T-cell (primary cell): ENCODE measurements at regions of chr1 and their contacts with region 1.

Region 1: GRCh38 chr1:154335025-154335714 is 9.8 kb downstream of the ATP8B2 start:
- DNase-seq: peak; percentile 80 to 97 (median 89)
- ATAC-seq: peak; percentile 89 to 95 (median 93)
- H3K4me3 ChIP-seq: no peak overlapping the region
- H3K4me3 Mint-ChIP-seq: peak overlapping the region in 2 of 3 donors; percentile 35 to 54
- H3K27ac ChIP-seq: peak overlapping the region; percentile 75
- H3K27ac Mint-ChIP-seq: peak overlapping the region; percentile 92 to 95
- H3K4me1 ChIP-seq: peaks cover 43 to 85% of the 10 kb centered on the region in 2 experiments
- H3K4me1 Mint-ChIP-seq: peaks cover 80 to 88% (median 83%) of the 10 kb centered on the region in 3 donors
- H3K27me3 ChIP-seq: no peaks in the 10 kb centered on the region
- H3K27me3 Mint-ChIP-seq: no peaks in the 10 kb centered on the region

Region 2: DNA sequence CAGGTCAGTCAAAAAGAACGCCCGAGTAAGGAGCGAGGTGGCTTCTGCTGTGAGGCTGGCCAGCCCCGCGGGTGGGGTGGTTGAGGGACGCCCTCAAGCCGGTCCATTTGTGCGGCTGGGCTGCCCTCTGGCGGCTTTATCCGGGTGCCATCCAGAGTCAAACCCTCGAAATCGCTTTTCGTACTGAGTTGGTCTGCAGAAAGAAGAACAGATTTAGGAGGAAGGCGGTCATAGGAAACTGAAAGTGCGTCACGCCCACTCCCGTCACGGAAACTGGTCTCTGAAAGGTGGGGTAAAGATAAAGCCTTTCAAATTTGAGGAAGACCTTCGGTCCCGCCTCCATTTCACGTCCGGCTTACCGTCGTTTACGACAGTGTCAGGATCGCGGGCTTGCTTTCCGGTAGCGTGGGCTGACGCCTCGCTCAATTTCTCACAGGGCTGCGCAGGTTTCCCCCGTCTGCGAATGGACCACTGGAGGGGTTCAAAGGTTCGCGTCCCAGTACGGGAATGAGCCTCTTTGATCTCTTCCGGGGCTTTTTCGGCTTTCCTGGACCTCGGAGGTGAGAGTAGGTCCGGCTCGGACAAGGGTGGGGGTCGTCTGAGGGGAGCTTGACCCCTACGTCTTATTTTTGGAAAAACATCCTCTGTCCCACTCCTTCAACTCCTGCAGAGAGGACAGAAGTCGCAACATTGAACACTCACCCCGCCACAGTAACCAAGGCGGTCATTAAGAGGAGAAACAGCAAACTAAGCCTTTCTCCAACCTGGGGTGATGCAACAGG is 62.8 kb before region 1 on chr1 and contains the start of gene HAX1:
- CTCF ChIA-PET with region 1: interaction called, 5 to 19 read pairs
- POLR2A ChIA-PET with region 1: interaction called in 1 of 2 experiments, 14 read pairs
- DNase-seq: peak; percentile 86 to 99 (median 96)
- ATAC-seq: peak; percentile 92 to 93 (median 92)
- H3K4me3 ChIP-seq: peak within 1 kb of the TSS; percentile 98 to 99
- H3K4me3 Mint-ChIP-seq: peak within 1 kb of the TSS; percentile 97 to 100 (median 97)
- H3K27ac ChIP-seq: peak within 1 kb of the TSS; percentile 96
- H3K27ac Mint-ChIP-seq: peak within 1 kb of the TSS; percentile 98
- H3K4me1 ChIP-seq: peaks cover 17 to 28% of the 10 kb centered on the region in 2 experiments
- H3K4me1 Mint-ChIP-seq: peaks cover 34 to 41% (median 39%) of the 10 kb centered on the region in 3 donors
- H3K27me3 ChIP-seq: no peaks in the 10 kb centered on the region
- H3K27me3 Mint-ChIP-seq: no peaks in the 10 kb centered on the region
- total RNA-seq, gene HAX1: 69.4 to 97.7 (median 92.5) TPM

Region 3: GRCh38 chr1:154324669-154325582 is 10.2 kb before region 1 on chr1 and contains the start of gene ATP8B2:
- CTCF ChIA-PET with region 1: interaction called, 12 to 87 read pairs
- POLR2A ChIA-PET with region 1: interaction called, 6 to 10 read pairs
- DNase-seq: peak; percentile 42 to 88 (median 70)
- ATAC-seq: peak; percentile 54 to 58 (median 55)
- H3K4me3 ChIP-seq: peak within 1 kb of the TSS; percentile 79 to 92
- H3K4me3 Mint-ChIP-seq: peak within 1 kb of the TSS; percentile 91 to 94 (median 94)
- H3K27ac ChIP-seq: peak within 1 kb of the TSS; percentile 82
- H3K27ac Mint-ChIP-seq: peak within 1 kb of the TSS; percentile 89 to 95
- H3K4me1 ChIP-seq: peaks cover 20 to 49% of the 10 kb centered on the region in 2 experiments
- H3K4me1 Mint-ChIP-seq: peaks cover 40 to 44% (median 43%) of the 10 kb centered on the region in 3 donors
- H3K27me3 ChIP-seq: peaks cover 0 to 14% of the 10 kb centered on the region in 2 experiments
- H3K27me3 Mint-ChIP-seq: peaks cover 0 to 2% of the 10 kb centered on the region in 2 donors
- total RNA-seq, gene ATP8B2: 142 to 172 (median 149) TPM

Region 4: DNA sequence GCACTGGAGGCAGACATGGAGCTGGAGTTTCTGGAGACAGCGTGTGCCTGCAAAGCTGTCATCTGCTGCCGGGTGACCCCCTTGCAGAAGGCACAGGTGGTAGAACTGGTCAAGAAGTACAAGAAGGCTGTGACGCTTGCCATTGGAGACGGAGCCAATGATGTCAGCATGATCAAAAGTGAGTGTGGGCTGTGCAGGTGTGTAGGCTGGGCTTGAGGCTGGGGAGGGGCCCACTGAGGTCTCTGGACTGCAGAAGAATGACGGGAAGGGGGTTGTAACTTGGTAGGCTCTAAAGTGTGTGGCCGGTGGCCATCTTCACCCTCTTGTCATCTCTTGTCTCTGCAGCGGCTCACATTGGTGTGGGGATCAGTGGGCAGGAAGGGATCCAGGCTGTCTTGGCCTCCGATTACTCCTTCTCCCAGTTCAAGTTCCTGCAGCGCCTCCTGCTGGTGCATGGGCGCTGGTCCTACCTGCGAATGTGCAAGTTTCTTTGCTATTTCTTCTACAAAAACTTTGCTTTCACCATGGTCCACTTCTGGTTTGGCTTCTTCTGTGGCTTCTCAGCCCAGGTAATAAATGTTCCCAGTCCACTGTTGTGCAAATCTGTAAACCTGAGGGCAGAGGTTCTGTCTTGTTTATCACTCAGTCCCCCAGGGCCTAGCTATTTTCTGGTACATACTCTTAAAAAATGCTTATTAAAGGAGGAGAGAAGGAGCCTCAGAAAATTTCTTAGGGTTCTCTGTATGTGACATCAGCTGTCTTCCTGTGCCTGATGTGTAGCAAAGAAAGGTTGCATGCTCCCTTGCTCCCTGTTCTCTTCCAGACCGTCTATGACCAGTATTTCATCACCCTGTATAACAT is 10.0 kb after region 1 on chr1:
- CTCF ChIA-PET with region 1: interaction called, 4 to 18 read pairs
- POLR2A ChIA-PET with region 1: interaction called in 1 of 2 experiments, 3 read pairs
- DNase-seq: peak; percentile 54 to 86 (median 72)
- ATAC-seq: peak; percentile 19 to 44 (median 32)
- H3K4me3 ChIP-seq: peak overlapping the region in 1 of 2 donors; percentile 52
- H3K4me3 Mint-ChIP-seq: peak overlapping the region; percentile 82 to 92 (median 89)
- H3K27ac ChIP-seq: no peak overlapping the region
- H3K27ac Mint-ChIP-seq: peak overlapping the region; percentile 99
- H3K4me1 ChIP-seq: peaks cover 31 to 93% of the 10 kb centered on the region in 2 experiments
- H3K4me1 Mint-ChIP-seq: peaks cover 80 to 93% (median 87%) of the 10 kb centered on the region in 3 donors
- H3K27me3 ChIP-seq: no peaks in the 10 kb centered on the region
- H3K27me3 Mint-ChIP-seq: no peaks in the 10 kb centered on the region

Region 5: DNA sequence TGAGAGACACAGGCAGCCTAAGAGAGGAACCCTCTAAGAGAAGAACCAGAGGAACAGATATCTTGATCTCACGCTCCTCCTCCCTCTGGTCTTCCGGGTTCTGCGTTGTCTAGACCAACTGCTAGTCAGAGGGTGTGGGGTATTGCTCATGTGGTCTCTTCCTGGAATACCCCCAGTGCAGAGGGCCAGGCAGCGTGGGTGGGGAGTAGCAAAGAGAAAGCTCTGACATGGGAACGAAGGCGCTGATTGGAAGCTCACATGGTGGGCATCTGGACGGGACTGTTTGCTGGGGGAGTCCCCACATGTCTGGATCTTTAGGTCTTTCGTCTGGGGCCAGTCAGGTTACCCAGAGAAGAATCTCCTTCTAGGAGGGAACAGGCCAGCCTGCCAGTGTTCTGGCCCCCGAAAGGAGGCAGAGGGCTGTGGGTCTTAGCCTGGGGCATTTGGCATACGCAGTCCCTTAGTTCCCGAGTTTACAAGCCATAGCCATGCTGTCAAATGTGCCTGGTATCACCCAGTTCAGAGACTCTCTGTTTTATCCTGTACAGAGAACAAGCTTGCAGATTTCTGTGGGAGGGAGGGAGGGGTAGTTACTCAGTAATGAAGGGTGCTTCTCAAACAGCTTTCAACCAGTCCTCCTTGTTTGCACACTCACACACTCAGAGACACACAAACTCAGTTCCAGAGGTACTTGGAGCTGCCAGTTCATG is 51.6 kb after region 1 on chr1:
- CTCF ChIA-PET with region 1: interaction called in 1 of 2 experiments, 14 read pairs
- POLR2A ChIA-PET with region 1: no interaction called
- DNase-seq: peak in 34 of 35 experiments; percentile 15 to 83 (median 58)
- ATAC-seq: peak; percentile 88 to 92 (median 88)
- H3K4me3 ChIP-seq: peak overlapping the region in 1 of 2 donors; percentile 37
- H3K4me3 Mint-ChIP-seq: peak overlapping the region; percentile 66 to 76 (median 70)
- H3K27ac ChIP-seq: peak overlapping the region; percentile 94
- H3K27ac Mint-ChIP-seq: peak overlapping the region; percentile 96 to 100
- H3K4me1 ChIP-seq: peaks cover 24 to 37% of the 10 kb centered on the region in 2 experiments
- H3K4me1 Mint-ChIP-seq: peaks cover 31 to 50% (median 40%) of the 10 kb centered on the region in 3 donors
- H3K27me3 ChIP-seq: no peaks in the 10 kb centered on the region
- H3K27me3 Mint-ChIP-seq: no peaks in the 10 kb centered on the region

Region 6: DNA sequence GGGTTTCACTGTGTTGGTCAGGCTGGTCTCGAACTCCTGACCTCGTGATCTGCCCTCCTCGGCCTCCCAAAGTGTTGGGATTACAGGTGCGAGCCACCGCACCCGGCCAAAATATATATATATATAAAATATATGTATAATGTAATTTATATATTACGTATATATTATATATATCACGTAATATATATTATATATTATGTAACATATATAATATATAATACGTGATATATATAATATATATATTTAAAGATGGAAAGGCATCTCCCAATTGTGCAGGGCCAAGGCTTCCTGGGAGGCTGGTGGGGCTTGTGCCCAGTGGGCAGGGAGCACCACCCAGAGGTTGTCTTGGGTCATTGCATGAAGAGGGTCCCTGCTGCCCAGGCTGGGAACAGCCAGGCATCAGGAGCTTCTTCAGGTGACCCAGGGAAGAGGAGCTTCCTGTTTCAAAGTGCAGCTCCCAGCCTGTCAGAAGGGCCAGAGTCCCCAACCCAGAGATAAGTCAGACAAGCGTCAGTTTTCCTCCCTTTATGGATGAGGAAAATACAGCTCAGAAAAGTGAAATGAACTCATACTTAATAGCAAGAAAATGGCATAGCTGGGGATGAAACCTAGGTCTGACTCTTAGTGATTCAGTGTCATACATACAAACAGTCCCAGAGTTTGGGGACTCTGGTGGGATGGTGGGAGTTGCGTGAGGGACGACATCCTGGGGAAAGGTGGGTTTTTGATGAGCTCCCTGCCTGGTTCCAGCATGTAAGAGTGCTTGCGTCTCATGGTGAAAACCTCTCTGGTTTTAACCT is 211.3 kb after region 1 on chr1:
- CTCF ChIA-PET with region 1: interaction called in 1 of 2 experiments, 11 read pairs
- POLR2A ChIA-PET with region 1: no interaction called
- DNase-seq: peak in 32 of 35 experiments; percentile 11 to 70 (median 32)
- ATAC-seq: peak; percentile 65 to 89 (median 78)
- H3K4me3 ChIP-seq: no peak overlapping the region
- H3K4me3 Mint-ChIP-seq: no peak overlapping the region
- H3K27ac ChIP-seq: no peak overlapping the region
- H3K27ac Mint-ChIP-seq: peak overlapping the region in 1 of 2 donors; percentile 64
- H3K4me1 ChIP-seq: no peaks in the 10 kb centered on the region
- H3K4me1 Mint-ChIP-seq: peaks cover 10 to 25% (median 19%) of the 10 kb centered on the region in 3 donors
- H3K27me3 ChIP-seq: peaks cover 0 to 6% of the 10 kb centered on the region in 2 experiments
- H3K27me3 Mint-ChIP-seq: peaks cover 0 to 7% of the 10 kb centered on the region in 2 donors

Region 7: GRCh38 chr1:154657556-154657955 is 322.4 kb after region 1 on chr1:
- CTCF ChIA-PET with region 1: no interaction called
- POLR2A ChIA-PET with region 1: no interaction called
- DNase-seq: no peak
- ATAC-seq: no peak
- H3K4me3 ChIP-seq: no peak overlapping the region
- H3K4me3 Mint-ChIP-seq: no peak overlapping the region
- H3K27ac ChIP-seq: no peak overlapping the region
- H3K27ac Mint-ChIP-seq: no peak overlapping the region
- H3K4me1 ChIP-seq: no peaks in the 10 kb centered on the region
- H3K4me1 Mint-ChIP-seq: no peaks in the 10 kb centered on the region
- H3K27me3 ChIP-seq: peaks cover 0 to 10% of the 10 kb centered on the region in 2 experiments
- H3K27me3 Mint-ChIP-seq: peaks cover 34 to 55% of the 10 kb centered on the region in 2 donors